Activated CD8-positive, alpha-beta T cell treated with anti-CD3 and anti-CD28 coated beads, Interleukin-2, amount 10 ng/mL, durations not matched to agents 7 days and 5 days (primary cell): ENCODE measurements at regions of chr11 and their contacts with region 1.

Region 1: GRCh38 chr11:62394825-62395538 is 23.9 kb upstream of the SCGB1A1 start:
- DNase-seq: peak; percentile 73
- ATAC-seq: peak; percentile 82
- H3K4me3 Mint-ChIP-seq: no peak overlapping the region
- H3K27ac Mint-ChIP-seq: no peak overlapping the region
- H3K4me1 Mint-ChIP-seq: peaks cover 33% of the 10 kb centered on the region
- H3K27me3 Mint-ChIP-seq: no peaks in the 10 kb centered on the region

Region 2: GRCh38 chr11:62315431-62315830 is 79.6 kb before region 1 on chr11:
- CTCF ChIA-PET with region 1: no interaction called
- POLR2A ChIA-PET with region 1: no interaction called
- DNase-seq: no peak
- ATAC-seq: no peak
- H3K4me3 Mint-ChIP-seq: no peak overlapping the region
- H3K27ac Mint-ChIP-seq: no peak overlapping the region
- H3K4me1 Mint-ChIP-seq: peaks cover 12% of the 10 kb centered on the region
- H3K27me3 Mint-ChIP-seq: peaks cover 16% of the 10 kb centered on the region

Region 3: DNA sequence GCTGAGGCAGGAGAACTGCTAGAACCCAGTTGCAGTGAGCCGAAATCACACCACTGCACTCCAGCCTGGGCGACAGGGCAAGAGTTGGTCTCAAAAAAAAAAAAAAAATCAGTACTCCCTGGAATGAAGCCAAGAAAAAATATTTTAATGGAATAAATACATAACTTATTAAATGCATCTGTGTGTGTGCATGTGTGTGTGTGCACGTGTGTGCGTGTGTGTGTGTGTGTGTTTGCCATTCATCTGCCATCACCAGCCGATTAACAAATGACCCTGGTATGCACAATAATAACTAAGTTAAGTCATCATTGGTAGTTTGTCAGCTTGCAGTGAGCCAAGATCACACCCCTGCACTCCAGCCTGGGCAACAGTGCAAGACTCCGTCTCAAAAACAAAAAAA is 11.2 kb before region 1 on chr11:
- CTCF ChIA-PET with region 1: interaction called, 18 read pairs
- POLR2A ChIA-PET with region 1: no interaction called
- DNase-seq: no peak
- ATAC-seq: no peak
- H3K4me3 Mint-ChIP-seq: no peak overlapping the region
- H3K27ac Mint-ChIP-seq: no peak overlapping the region
- H3K4me1 Mint-ChIP-seq: peaks cover 23% of the 10 kb centered on the region
- H3K27me3 Mint-ChIP-seq: peaks cover 12% of the 10 kb centered on the region

Region 4: GRCh38 chr11:62421996-62422395 is 27.0 kb after region 1 on chr11:
- CTCF ChIA-PET with region 1: interaction called, 96 read pairs
- POLR2A ChIA-PET with region 1: no interaction called
- DNase-seq: no peak
- ATAC-seq: no peak
- H3K4me3 Mint-ChIP-seq: no peak overlapping the region
- H3K27ac Mint-ChIP-seq: peak overlapping the region; percentile 3
- H3K4me1 Mint-ChIP-seq: peaks cover 32% of the 10 kb centered on the region
- H3K27me3 Mint-ChIP-seq: peaks cover 15% of the 10 kb centered on the region

Region 5: DNA sequence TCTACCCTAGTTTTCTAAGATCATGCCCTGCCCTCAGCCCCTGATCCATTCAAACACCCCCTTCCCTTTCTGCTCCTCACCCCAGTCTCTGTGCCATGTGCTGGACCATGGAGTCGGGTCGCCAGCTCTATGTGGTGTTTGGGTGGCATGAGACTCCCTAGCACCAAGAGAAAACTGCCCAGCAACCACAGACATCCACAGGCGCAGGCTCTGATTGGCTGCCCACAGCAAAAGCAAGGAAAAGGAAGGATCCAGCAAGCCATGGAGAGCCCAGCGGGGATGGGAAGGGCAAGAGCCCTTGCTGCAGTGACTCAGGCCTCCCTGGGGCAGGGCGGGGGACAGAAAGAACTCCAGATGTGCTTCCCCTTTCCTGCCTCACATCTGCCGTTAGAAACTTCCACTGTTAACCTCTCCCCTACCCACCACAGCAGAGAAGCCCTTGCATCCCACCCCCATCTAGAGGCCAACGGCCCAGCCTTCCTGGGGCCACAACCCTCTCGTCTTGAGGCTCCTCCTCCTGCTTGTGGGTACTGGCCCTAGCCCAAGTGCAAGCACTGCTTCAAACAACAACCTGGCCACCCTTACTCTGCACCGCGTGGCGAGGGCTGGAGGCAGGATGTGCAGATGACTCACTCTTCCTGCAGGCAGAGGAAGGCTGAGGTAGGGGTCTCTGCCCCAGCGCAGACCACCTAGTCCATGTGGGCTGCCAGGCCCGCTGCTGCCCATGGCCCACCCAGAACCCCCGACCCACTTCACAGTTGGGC is 161.3 kb after region 1 on chr11:
- CTCF ChIA-PET with region 1: interaction called, 91 read pairs
- POLR2A ChIA-PET with region 1: no interaction called
- DNase-seq: peak; percentile 94
- ATAC-seq: peak; percentile 72
- H3K4me3 Mint-ChIP-seq: peak overlapping the region; percentile 66
- H3K27ac Mint-ChIP-seq: peak overlapping the region; percentile 95
- H3K4me1 Mint-ChIP-seq: peaks cover 95% of the 10 kb centered on the region
- H3K27me3 Mint-ChIP-seq: no peaks in the 10 kb centered on the region

Region 6: GRCh38 chr11:62567018-62567633 is 172.1 kb after region 1 on chr11:
- CTCF ChIA-PET with region 1: interaction called, 91 read pairs
- POLR2A ChIA-PET with region 1: no interaction called
- DNase-seq: no peak
- ATAC-seq: peak; percentile 18
- H3K4me3 Mint-ChIP-seq: no peak overlapping the region
- H3K27ac Mint-ChIP-seq: peak overlapping the region; percentile 32
- H3K4me1 Mint-ChIP-seq: peaks cover 51% of the 10 kb centered on the region
- H3K27me3 Mint-ChIP-seq: no peaks in the 10 kb centered on the region

Region 7: DNA sequence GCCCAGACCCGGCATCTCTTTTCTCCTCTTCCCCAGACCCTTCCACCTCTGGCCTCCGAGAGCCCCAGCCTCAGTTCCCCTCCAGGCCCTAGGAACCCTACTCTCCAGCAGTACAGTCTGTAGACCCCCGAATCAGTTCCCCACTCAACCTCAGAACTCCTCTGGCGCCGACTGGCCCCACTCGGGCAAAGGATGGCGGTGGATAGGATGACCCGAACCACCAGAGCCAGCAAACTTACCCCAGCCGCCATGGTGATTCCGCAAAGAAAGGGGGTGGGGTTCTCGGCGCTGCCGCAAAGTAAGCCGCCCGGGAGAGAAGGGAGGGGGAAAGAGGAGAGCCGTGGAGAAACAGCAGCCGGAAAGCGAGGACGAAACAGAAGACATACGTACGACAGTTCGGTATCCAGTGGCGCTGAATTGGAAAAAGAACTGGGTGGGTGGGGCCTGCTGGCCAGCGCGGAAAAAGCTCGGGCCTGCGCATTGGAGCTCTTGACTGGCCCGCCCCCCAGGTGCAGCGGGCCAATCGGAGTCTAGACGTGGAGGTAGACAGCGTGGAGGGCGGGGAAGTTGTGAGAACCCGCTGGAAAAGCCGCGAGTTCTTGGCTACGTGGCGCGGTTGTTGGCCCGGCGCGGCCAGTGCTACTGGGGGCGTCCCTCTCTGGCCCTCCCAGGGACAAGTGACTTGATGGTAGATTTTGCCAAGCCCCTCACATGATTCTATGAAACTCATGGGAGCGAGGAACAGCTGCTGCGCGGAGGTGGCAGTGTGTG is 178.8 kb after region 1 on chr11 and contains the start of gene EEF1G:
- CTCF ChIA-PET with region 1: interaction called, 10 read pairs
- POLR2A ChIA-PET with region 1: no interaction called
- DNase-seq: peak; percentile 100
- ATAC-seq: peak; percentile 96
- H3K4me3 Mint-ChIP-seq: peak within 1 kb of the TSS; percentile 99
- H3K27ac Mint-ChIP-seq: peak within 1 kb of the TSS; percentile 97
- H3K4me1 Mint-ChIP-seq: peaks cover 53% of the 10 kb centered on the region
- H3K27me3 Mint-ChIP-seq: no peaks in the 10 kb centered on the region
- total RNA-seq, gene EEF1G: 1,058 to 1,098 TPM

Region 8: GRCh38 chr11:62694455-62695167 is 299.6 kb after region 1 on chr11:
- CTCF ChIA-PET with region 1: interaction called, 11 read pairs
- POLR2A ChIA-PET with region 1: no interaction called
- DNase-seq: peak; percentile 86
- ATAC-seq: peak; percentile 92
- H3K4me3 Mint-ChIP-seq: no peak overlapping the region
- H3K27ac Mint-ChIP-seq: peak overlapping the region; percentile 36
- H3K4me1 Mint-ChIP-seq: peaks cover 9% of the 10 kb centered on the region
- H3K27me3 Mint-ChIP-seq: no peaks in the 10 kb centered on the region